Vagina (tissue), 2 donors: ENCODE measurements at regions of chr10 and their contacts with region 1.

Region 1: GRCh38 chr10:49518982-49519578 is 19.8 kb downstream of the ERCC6 start:
- DNase-seq: no peak
- H3K4me3 ChIP-seq: no peak overlapping the region
- H3K27ac ChIP-seq: no peak overlapping the region
- H3K4me1 ChIP-seq: no peaks in the 10 kb centered on the region
- H3K27me3 ChIP-seq: no peaks in the 10 kb centered on the region
- CTCF ChIP-seq: peak; percentile 33 to 64 (median 37)
- POLR2A ChIP-seq: no peak

Region 2: DNA sequence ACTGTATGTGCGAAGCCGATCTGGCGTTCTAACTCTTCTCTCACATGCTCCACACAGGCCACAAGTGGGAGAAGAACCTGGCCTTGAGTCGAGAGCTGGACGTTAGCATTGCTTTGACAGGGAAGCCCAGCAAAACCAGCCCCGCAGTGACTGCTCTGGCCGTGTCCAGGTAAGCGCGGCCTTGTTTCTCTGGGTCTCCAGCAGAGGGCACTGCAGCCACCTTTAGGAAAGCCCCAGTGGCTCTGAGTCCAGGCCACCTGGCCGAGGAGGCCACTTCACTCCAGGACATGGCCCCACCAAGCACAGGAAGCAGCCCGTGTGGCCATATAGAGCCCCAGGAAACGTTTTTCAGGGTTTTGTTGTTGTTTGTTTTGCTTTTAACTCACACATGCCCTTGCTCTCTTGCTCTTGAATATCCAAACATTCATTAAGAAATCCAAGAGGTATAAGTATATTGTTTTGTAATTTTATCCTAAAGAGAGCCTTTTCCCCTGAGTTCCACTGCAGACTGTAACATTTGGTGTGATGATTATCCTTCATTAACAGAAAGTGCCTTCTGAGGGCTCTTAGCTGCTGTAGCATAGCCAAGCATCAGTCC is 537.7 kb before region 1 on chr10:
- intact Hi-C with region 1: loop called (anchors 10 kb)
- DNase-seq: no peak
- H3K4me3 ChIP-seq: no peak overlapping the region
- H3K27ac ChIP-seq: no peak overlapping the region
- H3K4me1 ChIP-seq: peaks cover 13% of the 10 kb centered on the region
- H3K27me3 ChIP-seq: no peaks in the 10 kb centered on the region
- CTCF ChIP-seq: peak; percentile 67 to 84 (median 79)
- POLR2A ChIP-seq: no peak

Region 3: DNA sequence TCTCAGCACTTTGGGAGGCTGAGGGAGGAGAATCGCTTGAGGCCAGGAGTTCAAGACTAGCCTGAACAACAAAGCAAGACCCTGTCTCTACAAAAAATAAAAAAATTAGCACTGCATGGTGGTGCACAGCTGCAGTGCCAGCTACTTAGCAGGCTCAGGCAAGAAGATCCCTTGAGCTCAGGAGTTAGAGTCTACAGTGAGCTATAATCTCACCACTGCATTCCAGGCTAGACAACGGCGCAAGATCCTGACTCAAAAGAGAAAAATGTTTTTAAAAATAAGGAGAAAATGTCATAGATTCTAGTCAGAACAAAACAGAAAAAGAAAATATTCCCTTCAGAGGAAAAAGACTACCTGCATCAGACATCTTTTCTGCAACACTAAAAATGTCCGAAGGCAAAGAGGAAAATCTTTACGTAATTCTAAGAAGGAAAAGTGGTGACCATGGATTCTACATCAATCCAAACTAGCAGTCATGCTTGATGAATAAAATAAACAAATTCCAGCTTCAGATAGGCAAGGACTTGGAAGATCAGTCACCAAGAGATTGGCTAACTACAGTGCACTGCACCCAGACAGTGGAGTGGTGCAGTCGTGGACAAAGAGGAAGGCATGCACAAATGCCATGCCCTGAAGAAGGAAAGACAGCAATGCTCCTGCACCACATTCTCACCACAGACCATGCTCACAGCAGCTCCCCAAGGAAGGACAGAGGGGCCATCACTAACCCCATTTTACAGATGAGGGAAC is 34.4 kb before region 1 on chr10:
- intact Hi-C with region 1: no loop called
- DNase-seq: no peak
- H3K4me3 ChIP-seq: no peak overlapping the region
- H3K27ac ChIP-seq: no peak overlapping the region
- H3K4me1 ChIP-seq: no peaks in the 10 kb centered on the region
- H3K27me3 ChIP-seq: no peaks in the 10 kb centered on the region
- CTCF ChIP-seq: no peak
- POLR2A ChIP-seq: no peak

Region 4: GRCh38 chr10:49749556-49750491 is 230.7 kb after region 1 on chr10:
- intact Hi-C with region 1: no loop called
- DNase-seq: peak in 1 of 2 donors; percentile 83
- H3K4me3 ChIP-seq: no peak overlapping the region
- H3K27ac ChIP-seq: no peak overlapping the region
- H3K4me1 ChIP-seq: no peaks in the 10 kb centered on the region
- H3K27me3 ChIP-seq: no peaks in the 10 kb centered on the region
- CTCF ChIP-seq: no peak
- POLR2A ChIP-seq: no peak